IMR-90 (cell line): ENCODE measurements at regions of chr7 and their contacts with region 1.

Region 1: DNA sequence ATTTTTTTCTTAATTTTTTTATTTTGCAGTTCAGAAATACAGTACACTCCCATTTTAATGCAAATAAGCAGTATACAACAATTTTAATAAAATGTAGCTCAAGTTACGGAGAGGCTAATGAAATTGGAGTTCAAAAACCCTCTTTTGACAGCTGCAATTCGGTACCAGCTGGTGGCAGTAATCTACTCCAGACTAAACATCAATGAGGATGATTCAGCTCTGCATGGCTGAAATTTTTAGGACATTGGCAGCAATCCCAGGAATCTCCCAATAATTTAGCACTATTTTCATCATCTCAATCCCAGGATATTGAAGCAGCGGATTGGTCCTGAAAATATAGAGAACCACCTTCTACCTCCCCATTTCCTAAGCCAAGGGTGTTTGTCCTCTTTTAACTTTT is 278.8 kb downstream of the CACNA2D1 start:
- DNase-seq: peak; percentile 79
- ATAC-seq: peak; percentile 72
- H3K4me3 ChIP-seq: no peak overlapping the region
- H3K27ac ChIP-seq: no peak overlapping the region
- H3K4me1 ChIP-seq: peaks cover 2% of the 10 kb centered on the region; the same call in 1 of the 2 replicates
- H3K27me3 ChIP-seq: no peaks in the 10 kb centered on the region
- CTCF ChIP-seq: peak; percentile 54
- POLR2A ChIP-seq: no peak
- RAD21 ChIP-seq: peak; percentile 51

Region 2: DNA sequence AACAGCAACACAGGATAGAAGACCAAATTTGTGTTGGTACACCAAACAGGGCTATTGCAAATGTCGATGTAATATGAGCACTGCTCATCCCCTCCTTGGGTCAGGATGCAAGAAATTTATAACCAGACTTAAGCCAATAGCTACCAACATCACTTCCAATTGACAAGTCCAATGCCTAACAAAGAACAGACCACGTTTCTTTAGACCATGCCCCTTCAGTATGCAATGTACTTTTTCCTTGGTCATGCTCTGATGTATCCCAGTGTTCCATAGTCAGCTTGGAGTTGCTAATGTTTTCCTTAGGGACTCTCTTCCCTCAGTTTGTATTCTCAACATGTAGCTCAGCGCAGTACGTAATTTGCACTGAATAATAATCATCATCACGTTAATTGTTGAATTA is 271.0 kb after region 1 on chr7:
- CTCF ChIA-PET with region 1: no interaction called
- POLR2A ChIA-PET with region 1: no interaction called
- dilution Hi-C with region 1: no loop called
- in situ Hi-C with region 1: no loop called
- intact Hi-C with region 1: loop called (anchors 2 kb)
- DNase-seq: no peak
- ATAC-seq: no peak
- H3K4me3 ChIP-seq: no peak overlapping the region
- H3K27ac ChIP-seq: no peak overlapping the region
- H3K4me1 ChIP-seq: peaks cover 2% of the 10 kb centered on the region; the same call in 1 of the 2 replicates
- H3K27me3 ChIP-seq: no peaks in the 10 kb centered on the region
- CTCF ChIP-seq: no peak
- POLR2A ChIP-seq: no peak
- RAD21 ChIP-seq: no peak

Region 3: GRCh38 chr7:82562716-82563404 is 398.0 kb after region 1 on chr7:
- CTCF ChIA-PET with region 1: no interaction called
- POLR2A ChIA-PET with region 1: no interaction called
- dilution Hi-C with region 1: no loop called
- in situ Hi-C with region 1: no loop called
- intact Hi-C with region 1: loop called (anchors 10 kb)
- DNase-seq: peak; percentile 76
- ATAC-seq: peak; percentile 87
- H3K4me3 ChIP-seq: no peak overlapping the region
- H3K27ac ChIP-seq: no peak overlapping the region
- H3K4me1 ChIP-seq: peaks cover 5% of the 10 kb centered on the region
- H3K27me3 ChIP-seq: no peaks in the 10 kb centered on the region
- CTCF ChIP-seq: no peak
- POLR2A ChIP-seq: no peak
- RAD21 ChIP-seq: no peak